Breast epithelium (tissue), 4 donors: ENCODE measurements at regions of chr10 and their contacts with region 1.

Region 1: GRCh38 chr10:97463363-97464132 is 17.6 kb downstream of the ZDHHC16 start:
- DNase-seq: no peak
- H3K4me3 ChIP-seq: no peak overlapping the region
- H3K27ac ChIP-seq: peak overlapping the region; percentile 48 to 65
- H3K4me1 ChIP-seq: no peaks in the 10 kb centered on the region
- H3K27me3 ChIP-seq: no peaks in the 10 kb centered on the region
- CTCF ChIP-seq: peak; percentile 68 to 90 (median 88)
- POLR2A ChIP-seq: no peak

Region 2: DNA sequence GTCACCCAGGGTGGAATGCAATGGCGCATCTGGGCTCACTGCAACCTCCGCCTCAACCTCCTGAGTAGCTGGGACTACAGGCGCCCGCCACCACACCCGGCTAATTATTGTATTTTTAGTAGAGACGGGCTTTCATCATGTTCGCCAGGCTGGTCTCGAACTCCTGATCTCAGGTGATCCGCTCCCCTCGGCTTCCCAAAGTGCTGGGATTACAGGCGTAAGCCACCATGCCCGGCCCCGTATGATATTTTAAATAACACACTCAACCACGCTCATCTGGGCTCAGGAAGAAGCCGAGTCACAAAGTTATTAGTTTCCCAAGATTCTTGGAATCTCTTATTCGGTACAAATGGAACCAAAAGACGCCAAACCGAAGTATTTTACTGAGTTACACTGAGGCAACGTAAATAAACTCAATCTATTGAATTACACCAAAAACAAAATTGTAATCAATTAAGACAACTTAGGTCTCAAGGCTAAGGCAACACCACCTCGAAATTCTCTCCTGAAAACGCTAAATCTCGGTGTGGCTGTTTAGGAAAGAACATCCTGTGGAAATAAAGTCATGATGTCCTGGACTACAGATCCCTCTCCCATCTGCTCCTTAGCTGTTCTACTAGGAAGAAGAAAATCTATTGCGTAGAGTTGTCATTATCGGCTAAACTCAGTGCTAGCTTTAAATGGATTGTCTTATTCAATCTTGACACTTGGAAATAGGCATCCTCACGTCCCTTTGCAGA is 172.0 kb before region 1 on chr10:
- intact Hi-C with region 1: no loop called
- DNase-seq: no peak
- H3K4me3 ChIP-seq: peak overlapping the region; percentile 83 to 95 (median 90)
- H3K27ac ChIP-seq: peak overlapping the region; percentile 96
- H3K4me1 ChIP-seq: no peaks in the 10 kb centered on the region
- H3K27me3 ChIP-seq: no peaks in the 10 kb centered on the region
- CTCF ChIP-seq: no peak
- POLR2A ChIP-seq: no peak

Region 3: GRCh38 chr10:97388152-97388551 is 75.4 kb before region 1 on chr10:
- intact Hi-C with region 1: no loop called
- DNase-seq: no peak
- H3K4me3 ChIP-seq: no peak overlapping the region
- H3K27ac ChIP-seq: no peak overlapping the region
- H3K4me1 ChIP-seq: no peaks in the 10 kb centered on the region
- H3K27me3 ChIP-seq: no peaks in the 10 kb centered on the region
- CTCF ChIP-seq: no peak
- POLR2A ChIP-seq: no peak

Region 4: DNA sequence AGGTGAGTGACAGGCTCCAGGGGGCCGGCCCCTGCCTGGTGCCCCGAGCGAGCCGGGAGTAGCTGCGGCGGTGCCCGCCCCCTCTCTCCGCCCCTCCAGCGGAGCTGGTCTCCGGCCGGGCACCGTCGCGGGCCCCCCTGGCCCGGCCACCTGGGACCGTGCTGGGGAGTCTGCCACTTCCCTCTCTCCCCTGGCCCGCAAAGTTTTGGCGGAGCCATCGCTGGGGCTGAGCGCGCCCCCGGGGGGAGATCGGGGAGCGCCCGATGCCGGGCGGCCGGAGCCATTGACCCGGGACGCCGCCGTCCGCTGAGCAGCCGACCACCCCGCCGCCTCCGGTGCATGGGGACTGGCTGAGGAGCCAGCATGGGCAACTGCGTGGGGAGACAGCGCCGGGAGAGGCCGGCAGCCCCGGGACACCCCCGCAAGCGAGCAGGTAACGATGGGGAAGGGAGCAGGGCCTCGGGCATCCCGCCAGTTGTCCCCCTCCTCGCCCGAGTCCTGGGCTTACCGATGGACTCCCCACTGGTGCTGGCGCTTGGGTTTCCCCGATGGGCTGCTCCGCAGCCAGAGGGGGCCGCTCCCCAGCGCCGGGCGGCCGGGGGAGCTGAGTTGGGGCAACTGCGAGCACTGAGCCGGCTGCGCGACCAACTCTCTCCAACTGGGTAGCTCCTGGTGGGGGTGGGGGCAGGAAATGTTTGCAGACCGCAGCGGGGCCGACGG is 35.5 kb after region 1 on chr10 and contains the start of gene UBTD1:
- intact Hi-C with region 1: no loop called
- DNase-seq: peak; percentile 40 to 62
- H3K4me3 ChIP-seq: peak within 1 kb of the TSS; percentile 80 to 98 (median 84)
- H3K27ac ChIP-seq: peak within 1 kb of the TSS; percentile 89 to 93
- H3K4me1 ChIP-seq: peaks cover 0 to 5% of the 10 kb centered on the region in 2 donors
- H3K27me3 ChIP-seq: no peaks in the 10 kb centered on the region
- CTCF ChIP-seq: no peak
- POLR2A ChIP-seq: no peak
- total RNA-seq, gene UBTD1: 9.9 to 14.7 (median 12.4) TPM

Region 5: GRCh38 chr10:97543025-97543575 is 79.6 kb after region 1 on chr10:
- intact Hi-C with region 1: loop called (anchors 10 kb)
- DNase-seq: peak; percentile 63 to 85
- H3K4me3 ChIP-seq: peak overlapping the region in 1 of 3 donors; percentile 29
- H3K27ac ChIP-seq: peak overlapping the region; percentile 95 to 98
- H3K4me1 ChIP-seq: peaks cover 14 to 23% of the 10 kb centered on the region in 2 donors
- H3K27me3 ChIP-seq: no peaks in the 10 kb centered on the region
- CTCF ChIP-seq: no peak
- POLR2A ChIP-seq: no peak

Region 6: DNA sequence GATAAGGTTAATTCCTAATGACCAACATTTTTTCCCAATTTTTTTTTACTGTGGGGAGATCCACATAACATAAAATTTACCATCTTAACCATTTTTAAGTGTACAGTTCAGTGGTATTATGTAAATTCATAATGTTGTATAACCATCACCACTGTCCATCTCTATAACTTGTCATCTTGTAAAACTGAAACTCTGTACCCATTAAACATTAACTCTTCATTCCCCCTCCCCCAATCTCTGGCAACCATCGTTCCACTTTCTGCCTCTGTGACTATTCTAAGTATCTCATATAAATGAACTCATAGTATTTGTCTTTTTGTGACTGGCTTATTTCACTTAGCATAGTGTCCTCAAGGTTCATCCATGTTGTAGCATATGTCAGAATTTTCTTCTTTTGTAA is 1029.2 kb after region 1 on chr10:
- intact Hi-C with region 1: no loop called
- DNase-seq: no peak
- H3K4me3 ChIP-seq: no peak overlapping the region
- H3K27ac ChIP-seq: no peak overlapping the region
- H3K4me1 ChIP-seq: no peaks in the 10 kb centered on the region
- H3K27me3 ChIP-seq: no peaks in the 10 kb centered on the region
- CTCF ChIP-seq: no peak
- POLR2A ChIP-seq: no peak